ENCODE measurements at regions of chr17 and their contacts with region 1.

Region 1: GRCh38 chr17:62703775-62704378 is 76.4 kb downstream of the MRC2 start:
- DNase-seq: peak; percentile 89
- ATAC-seq: peak; percentile 92

Region 2: GRCh38 chr17:62653002-62653825 is 50.7 kb before region 1 on chr17:
- intact Hi-C with region 1: no loop called
- DNase-seq: peak; percentile 78
- ATAC-seq: peak; percentile 61

Region 3: GRCh38 chr17:62725791-62726249 is 21.9 kb after region 1 on chr17:
- intact Hi-C with region 1: loop called (anchors 2 kb)
- DNase-seq: no peak
- ATAC-seq: no peak

Region 4: GRCh38 chr17:62933501-62934385 is 229.9 kb after region 1 on chr17:
- intact Hi-C with region 1: no loop called
- DNase-seq: no peak
- ATAC-seq: no peak

Region 5: GRCh38 chr17:62968445-62968923 is 264.6 kb after region 1 on chr17:
- intact Hi-C with region 1: loop called (anchors 1 kb)
- DNase-seq: no peak
- ATAC-seq: peak; percentile 60

Measured in Right ventricle myocardium inferior (tissue), 1 donor.